ENCODE measurements at regions of chr2 and their contacts with region 1.

Region 1: GRCh38 chr2:72515696-72516095 is 310.1 kb downstream of the EXOC6B start:
- DNase-seq: no peak
- H3K4me3 ChIP-seq: no peak overlapping the region
- CTCF ChIP-seq: no peak

Region 2: GRCh38 chr2:72527424-72527823 is 11.7 kb after region 1 on chr2:
- CTCF ChIA-PET with region 1: interaction called, 10 read pairs
- POLR2A ChIA-PET with region 1: no interaction called
- DNase-seq: no peak
- H3K4me3 ChIP-seq: no peak overlapping the region
- CTCF ChIP-seq: no peak

Measured in AG04449 (cell line).